Activated CD4-positive, alpha-beta T cell treated with anti-CD3 and anti-CD28 coated beads for 36 hours (primary cell): ENCODE measurements at regions of chr3 and their contacts with region 1.

Region 1: DNA sequence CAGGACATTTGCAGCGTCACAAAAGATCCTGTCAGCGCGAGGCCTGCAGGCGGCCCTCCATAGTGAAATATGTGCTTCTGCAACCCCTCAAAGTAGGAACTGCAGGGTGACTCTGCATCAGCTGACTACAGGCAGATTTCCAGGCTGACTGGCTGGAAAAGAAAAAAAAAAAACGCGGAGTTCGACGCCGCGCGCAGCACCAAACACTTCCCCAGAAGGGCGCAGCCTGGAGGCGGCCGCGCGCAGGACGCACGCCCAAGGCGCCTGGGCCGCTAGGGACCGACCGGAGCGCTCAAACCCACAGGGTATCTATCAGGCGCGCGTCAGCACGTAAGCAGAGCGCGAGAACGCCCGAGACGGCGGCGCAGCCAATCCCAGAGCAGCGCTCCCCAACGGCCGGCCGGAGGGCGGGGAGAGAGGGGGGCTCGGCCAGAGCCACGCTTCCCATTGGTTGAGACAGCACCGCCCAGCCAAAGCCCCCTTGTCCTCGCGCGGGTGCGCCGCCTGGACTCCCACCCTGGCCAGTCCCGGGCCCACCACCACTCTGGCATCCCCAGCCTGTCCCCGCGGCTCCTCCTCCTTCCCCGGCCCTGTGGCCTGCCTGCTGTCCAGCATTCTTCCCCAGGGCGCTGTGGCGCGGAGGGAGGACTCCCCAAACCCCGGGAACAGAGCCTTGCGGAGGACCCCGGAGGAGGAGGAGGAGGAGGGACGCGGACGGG is 1.0 kb downstream of the BDH1 start:
- DNase-seq: peak; percentile 98
- ATAC-seq: peak; percentile 97
- H3K4me3 Mint-ChIP-seq: peak overlapping the region; percentile 84
- H3K27ac Mint-ChIP-seq: peak overlapping the region; percentile 89
- H3K4me1 Mint-ChIP-seq: peaks cover 10% of the 10 kb centered on the region
- H3K27me3 Mint-ChIP-seq: peaks cover 13% of the 10 kb centered on the region

Region 2: GRCh38 chr3:197002701-197003454 is 551.8 kb before region 1 on chr3:
- CTCF ChIA-PET with region 1: no interaction called
- POLR2A ChIA-PET with region 1: no interaction called
- intact Hi-C with region 1: loop called in 1 of 2 experiments (anchors 1 kb)
- DNase-seq: peak; percentile 90
- ATAC-seq: peak; percentile 81
- H3K4me3 Mint-ChIP-seq: peak overlapping the region; percentile 71
- H3K27ac Mint-ChIP-seq: no peak overlapping the region
- H3K4me1 Mint-ChIP-seq: peaks cover 9% of the 10 kb centered on the region
- H3K27me3 Mint-ChIP-seq: no peaks in the 10 kb centered on the region

Region 3: DNA sequence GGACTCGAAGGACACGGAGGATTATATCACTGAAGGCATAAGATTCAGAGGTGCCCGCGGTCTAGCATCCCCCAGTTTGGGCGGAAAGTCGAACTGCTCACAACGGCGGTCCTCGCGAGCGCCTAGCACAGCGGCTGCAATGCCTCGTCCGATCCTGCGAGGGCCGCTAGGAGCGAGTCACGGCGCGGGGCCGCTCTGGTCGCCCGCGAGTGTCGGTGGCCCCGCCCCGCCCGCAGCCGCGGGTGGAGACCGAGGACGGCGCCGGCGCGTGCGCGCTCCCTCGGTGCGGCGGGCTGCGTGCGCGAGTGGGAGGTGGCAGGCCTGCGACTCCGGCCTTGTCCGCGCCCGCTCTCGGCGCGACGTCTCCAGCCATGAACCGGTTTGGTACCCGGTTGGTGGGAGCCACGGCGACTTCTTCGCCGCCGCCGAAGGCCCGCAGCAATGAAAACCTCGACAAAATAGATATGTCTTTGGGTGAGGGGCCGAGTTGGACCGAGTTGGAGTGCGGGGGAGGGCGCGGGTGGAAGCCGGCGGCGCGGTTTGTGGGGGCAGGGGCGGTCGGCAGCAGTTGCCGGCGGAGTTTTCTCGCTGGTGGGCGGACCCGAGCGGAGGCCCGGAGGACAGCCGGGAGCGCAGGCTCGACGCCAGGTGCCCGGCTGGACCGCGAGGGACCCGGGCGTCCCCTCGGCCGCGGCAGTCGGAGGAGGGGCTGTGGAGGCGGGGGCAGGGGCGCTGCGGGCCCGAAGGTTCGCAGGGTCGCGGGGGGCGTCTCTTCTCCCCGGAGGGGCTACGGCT is 195.1 kb after region 1 on chr3 and contains the start of gene FYTTD1:
- CTCF ChIA-PET with region 1: no interaction called
- POLR2A ChIA-PET with region 1: no interaction called
- intact Hi-C with region 1: loop called in 1 of 2 experiments (anchors 2 kb)
- DNase-seq: peak; percentile 89
- ATAC-seq: peak; percentile 81
- H3K4me3 Mint-ChIP-seq: peak within 1 kb of the TSS; percentile 89
- H3K27ac Mint-ChIP-seq: peak within 1 kb of the TSS; percentile 87
- H3K4me1 Mint-ChIP-seq: peaks cover 37% of the 10 kb centered on the region
- H3K27me3 Mint-ChIP-seq: no peaks in the 10 kb centered on the region
- total RNA-seq, gene FYTTD1: 20.7 to 25.6 TPM

Region 4: GRCh38 chr3:197949754-197950660 is 395.3 kb after region 1 on chr3 and contains the start of gene RPL35A:
- CTCF ChIA-PET with region 1: no interaction called
- POLR2A ChIA-PET with region 1: no interaction called
- intact Hi-C with region 1: loop called in 1 of 2 experiments (anchors 2 kb)
- DNase-seq: peak; percentile 90
- ATAC-seq: peak; percentile 89
- H3K4me3 Mint-ChIP-seq: peak within 1 kb of the TSS; percentile 87
- H3K27ac Mint-ChIP-seq: peak within 1 kb of the TSS; percentile 97
- H3K4me1 Mint-ChIP-seq: peaks cover 47% of the 10 kb centered on the region
- H3K27me3 Mint-ChIP-seq: no peaks in the 10 kb centered on the region
- total RNA-seq, gene RPL35A: 1,121 to 1,734 TPM